ENCODE measurements at regions of chr3 and their contacts with region 1.

Region 1: DNA sequence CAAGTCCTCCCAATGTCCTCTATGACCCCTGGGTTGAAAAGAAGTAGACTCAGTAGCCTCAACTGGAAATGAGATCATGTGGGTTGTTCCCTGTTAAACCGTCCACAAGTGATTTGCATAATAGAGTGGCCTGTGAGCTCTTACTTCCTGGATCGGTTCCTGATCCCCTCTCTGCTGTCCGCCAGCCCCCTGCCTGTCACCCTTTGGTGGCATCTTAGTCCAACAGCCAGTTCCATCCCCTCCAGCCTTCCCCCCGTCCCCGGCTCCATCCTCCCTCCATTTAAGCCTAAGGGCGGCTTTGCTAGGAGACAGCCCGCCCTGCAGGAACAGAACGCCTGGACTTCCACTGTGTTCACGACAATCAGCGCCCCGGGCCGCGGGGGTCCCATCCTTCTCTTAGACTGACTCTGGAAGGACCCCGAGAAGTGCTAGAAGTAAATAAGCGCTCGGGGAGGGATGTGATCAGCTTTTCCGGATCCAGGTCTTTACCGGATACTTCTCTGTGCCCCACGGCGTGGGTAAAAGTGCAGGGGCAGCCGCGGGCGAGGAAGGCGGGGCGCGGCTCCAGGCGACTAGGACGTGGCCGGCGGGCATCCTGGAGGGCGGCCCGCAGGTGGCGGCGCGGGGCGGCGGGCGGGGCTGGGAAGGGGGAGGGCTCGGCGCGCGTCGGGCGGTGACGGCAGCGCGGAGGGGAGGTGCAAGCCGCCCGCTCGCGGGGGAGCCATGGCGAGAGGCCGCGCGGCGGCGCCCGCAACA is 51.2 kb upstream of the ULK4 start:
- DNase-seq: peak; percentile 81
- ATAC-seq: peak; percentile 90 to 91

Region 2: GRCh38 chr3:41961750-41962679 is 51.1 kb before region 1 on chr3 and contains the start of gene ULK4:
- intact Hi-C with region 1: no loop called
- DNase-seq: peak; percentile 98
- ATAC-seq: peak; percentile 97 to 98
- total RNA-seq, gene ULK4: 12.7 to 13.8 TPM

Region 3: DNA sequence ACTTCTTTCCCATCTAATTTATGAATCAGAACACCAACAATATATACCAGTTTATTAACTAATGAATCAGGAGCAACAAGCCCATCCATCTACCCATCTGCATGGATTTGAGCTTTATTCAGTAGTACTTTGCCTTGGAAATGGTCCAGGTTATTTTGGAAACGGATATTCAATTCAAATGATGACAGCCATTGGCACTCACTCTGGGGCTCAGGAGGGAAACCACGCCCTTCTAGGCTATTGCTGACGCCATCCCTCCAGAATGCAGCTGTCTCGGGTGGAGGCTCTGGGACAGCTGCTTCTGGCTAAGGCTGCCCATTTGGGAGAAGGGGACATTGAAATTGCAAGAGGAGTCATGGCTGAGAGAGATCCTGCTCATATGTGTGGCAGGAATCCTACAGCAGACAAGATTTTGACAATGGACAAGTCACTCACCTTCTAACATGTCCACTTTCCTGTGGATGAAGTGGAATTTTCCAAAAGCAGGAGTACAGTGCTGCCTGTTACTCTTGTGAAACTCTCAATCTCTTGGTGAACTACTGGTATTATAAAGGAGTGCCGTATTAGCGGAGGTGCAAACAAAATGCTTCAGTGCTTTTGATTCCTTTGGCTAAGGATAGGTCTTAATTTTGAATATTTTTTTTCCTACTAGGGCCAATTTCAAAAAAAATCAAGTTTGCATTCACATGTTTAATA is 48.7 kb after region 1 on chr3:
- intact Hi-C with region 1: loop called in 1 of 2 experiments (anchors 5 kb)
- DNase-seq: peak; percentile 87
- ATAC-seq: peak; percentile 90 to 94

Region 4: DNA sequence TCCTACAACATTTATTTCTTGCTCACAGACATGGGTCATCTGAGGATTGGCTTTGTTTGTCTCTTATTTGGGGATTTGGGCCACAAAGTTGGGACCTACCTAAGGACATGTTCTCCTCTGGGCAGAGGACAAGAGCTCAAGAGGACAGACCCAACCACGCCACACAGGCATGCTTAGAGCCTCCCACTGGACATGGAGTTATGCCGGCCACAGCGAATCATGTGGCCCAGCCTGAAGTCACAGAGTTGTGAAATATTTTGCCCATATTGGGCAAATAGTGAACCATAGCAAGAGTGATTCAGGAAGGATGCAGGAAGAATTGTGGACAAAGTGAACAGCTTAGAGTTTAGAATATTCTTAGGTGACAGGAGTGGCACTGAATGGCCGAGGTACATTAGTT is 87.9 kb after region 1 on chr3:
- intact Hi-C with region 1: loop called (anchors 2 to 5 kb)
- DNase-seq: peak; percentile 61
- ATAC-seq: peak; percentile 67 to 90